Sigmoid colon (tissue), 7 donors: ENCODE measurements at regions of chr1 and their contacts with region 1.

Region 1: DNA sequence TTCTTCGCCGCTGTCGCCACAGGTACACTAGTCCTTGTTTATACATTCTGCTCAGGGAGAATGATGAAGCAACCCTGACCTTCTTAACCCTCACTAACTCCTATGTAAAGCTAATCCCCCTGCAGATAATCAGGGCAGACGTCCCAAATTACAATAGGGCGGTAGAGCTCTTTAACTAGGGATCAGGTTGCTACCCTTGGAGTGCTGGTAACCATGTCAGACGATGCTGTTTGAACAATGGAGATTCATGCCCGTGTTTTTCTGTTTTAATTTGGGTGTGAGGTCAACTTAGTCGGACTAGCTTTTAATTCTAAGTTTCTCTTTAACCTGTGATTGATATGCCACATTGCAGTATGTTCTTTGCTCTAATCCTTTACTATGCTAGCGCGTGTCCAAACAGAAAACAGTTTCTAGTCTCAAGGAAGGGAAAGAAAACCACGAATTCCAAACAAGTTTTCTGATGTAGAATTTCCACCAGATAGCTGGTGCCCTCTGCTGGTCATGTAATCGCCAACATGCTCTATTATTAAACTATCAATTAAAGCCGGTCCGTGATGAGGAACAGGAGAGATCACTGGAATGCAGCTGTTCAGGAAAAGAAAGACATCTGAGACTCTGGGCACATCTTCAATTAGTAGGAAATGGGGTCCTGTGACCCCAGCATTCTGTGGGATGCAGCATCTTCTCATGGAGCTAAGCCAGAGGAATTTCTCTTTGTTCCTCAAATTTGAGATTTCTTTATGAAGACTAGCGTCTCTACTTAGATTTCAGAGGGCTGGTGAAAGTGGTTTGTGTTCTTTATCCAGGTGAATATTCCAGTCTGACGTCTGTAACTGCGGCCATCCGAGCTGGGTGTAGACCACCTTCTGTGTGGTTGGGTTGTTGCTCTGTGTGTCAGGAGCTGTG is 18.3 kb upstream of the VAMP3 start:
- DNase-seq: peak; percentile 77
- H3K4me3 ChIP-seq: peak overlapping the region; percentile 2 to 40 (median 37)
- H3K27ac ChIP-seq: peak overlapping the region in 3 of 4 donors; percentile 6 to 49 (median 17)
- H3K4me1 ChIP-seq: peaks cover 0 to 25% (median 3%) of the 10 kb centered on the region in 4 donors
- H3K27me3 ChIP-seq: no peaks in the 10 kb centered on the region
- CTCF ChIP-seq: peak; percentile 63 to 80 (median 76)
- EP300 ChIP-seq: no peak
- POLR2A ChIP-seq: no peak

Region 2: GRCh38 chr1:7667625-7668218 is 85.0 kb before region 1 on chr1:
- intact Hi-C with region 1: loop called (anchors 1 kb)
- DNase-seq: peak; percentile 94
- H3K4me3 ChIP-seq: no peak overlapping the region
- H3K27ac ChIP-seq: peak overlapping the region in 2 of 4 donors; percentile 30 to 56
- H3K4me1 ChIP-seq: peaks cover 0 to 18% (median 13%) of the 10 kb centered on the region in 4 donors
- H3K27me3 ChIP-seq: peaks cover 0 to 4% (median 0%) of the 10 kb centered on the region in 3 donors
- CTCF ChIP-seq: peak; percentile 99 to 100 (median 100)
- EP300 ChIP-seq: no peak
- POLR2A ChIP-seq: no peak

Region 3: DNA sequence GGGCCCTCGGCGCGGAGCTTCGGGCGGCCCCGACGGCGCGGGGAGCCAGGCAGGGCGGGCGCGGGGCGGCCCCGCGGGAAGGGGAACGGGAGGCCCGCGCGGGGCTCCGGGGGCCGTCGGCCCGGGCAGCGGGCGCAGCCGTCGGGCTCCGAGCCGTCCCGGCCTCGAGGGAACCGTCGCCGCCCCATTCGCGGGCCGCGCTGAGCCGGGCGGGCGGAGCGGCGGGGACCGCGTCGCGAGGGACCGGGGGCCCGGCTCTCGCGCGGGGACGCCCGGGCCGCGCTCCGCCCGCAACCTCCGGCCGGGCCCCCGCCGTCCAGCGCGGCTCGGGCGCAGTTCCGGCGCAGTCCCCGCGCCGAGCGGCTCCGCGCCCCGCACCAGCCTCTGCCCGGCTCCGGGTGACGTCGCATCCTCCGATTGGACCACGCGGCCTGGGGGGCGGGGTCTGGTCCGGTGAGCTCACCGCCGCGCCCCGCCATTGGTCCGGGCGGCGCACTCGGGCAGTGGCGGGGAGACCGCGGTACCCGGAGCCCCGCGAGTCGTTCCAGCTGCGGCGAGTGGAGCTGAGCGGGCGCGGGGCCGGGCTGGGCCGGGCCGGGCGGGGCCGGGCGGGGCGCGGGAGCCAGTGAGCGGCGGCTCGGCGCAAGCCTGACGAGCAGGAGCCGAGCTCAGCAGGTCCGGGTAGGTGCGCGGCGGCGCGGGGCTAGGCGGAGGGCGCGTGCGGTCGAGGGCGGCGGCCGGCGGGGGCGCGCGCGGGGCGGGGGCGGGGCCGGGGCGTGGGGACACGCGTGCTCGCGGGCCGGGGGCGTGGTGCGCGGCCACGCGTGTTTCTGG is 48.3 kb before region 1 on chr1:
- intact Hi-C with region 1: loop called (anchors 1 kb)
- DNase-seq: peak; percentile 96
- H3K4me3 ChIP-seq: peak overlapping the region; percentile 36 to 58 (median 49)
- H3K27ac ChIP-seq: peak overlapping the region in 2 of 4 donors; percentile 56 to 67
- H3K4me1 ChIP-seq: peaks cover 0 to 20% (median 7%) of the 10 kb centered on the region in 4 donors
- H3K27me3 ChIP-seq: peaks cover 0 to 18% (median 16%) of the 10 kb centered on the region in 3 donors
- CTCF ChIP-seq: no peak
- EP300 ChIP-seq: no peak
- POLR2A ChIP-seq: no peak

Region 4: GRCh38 chr1:7902478-7903085 is 149.8 kb after region 1 on chr1:
- intact Hi-C with region 1: loop called (anchors 5 kb)
- DNase-seq: peak; percentile 82
- H3K4me3 ChIP-seq: peak overlapping the region in 2 of 4 donors; percentile 20 to 21
- H3K27ac ChIP-seq: no peak overlapping the region
- H3K4me1 ChIP-seq: peaks cover 0 to 3% (median 0%) of the 10 kb centered on the region in 4 donors
- H3K27me3 ChIP-seq: no peaks in the 10 kb centered on the region
- CTCF ChIP-seq: peak; percentile 44 to 74 (median 56)
- EP300 ChIP-seq: no peak
- POLR2A ChIP-seq: no peak